Vagina (tissue), 2 donors: ENCODE measurements at regions of chr14 and their contacts with region 1.

Region 1: GRCh38 chr14:35046048-35046741 is at the start of gene FAM177A1:
- DNase-seq: peak; percentile 98 to 99
- H3K4me3 ChIP-seq: peak within 1 kb of the TSS; percentile 77 to 79
- H3K27ac ChIP-seq: peak within 1 kb of the TSS; percentile 88
- H3K4me1 ChIP-seq: peaks cover 31% of the 10 kb centered on the region
- H3K27me3 ChIP-seq: no peaks in the 10 kb centered on the region
- CTCF ChIP-seq: no peak
- POLR2A ChIP-seq: peak; percentile 29 to 80
- total RNA-seq, gene FAM177A1: 41.3 TPM

Region 2: DNA sequence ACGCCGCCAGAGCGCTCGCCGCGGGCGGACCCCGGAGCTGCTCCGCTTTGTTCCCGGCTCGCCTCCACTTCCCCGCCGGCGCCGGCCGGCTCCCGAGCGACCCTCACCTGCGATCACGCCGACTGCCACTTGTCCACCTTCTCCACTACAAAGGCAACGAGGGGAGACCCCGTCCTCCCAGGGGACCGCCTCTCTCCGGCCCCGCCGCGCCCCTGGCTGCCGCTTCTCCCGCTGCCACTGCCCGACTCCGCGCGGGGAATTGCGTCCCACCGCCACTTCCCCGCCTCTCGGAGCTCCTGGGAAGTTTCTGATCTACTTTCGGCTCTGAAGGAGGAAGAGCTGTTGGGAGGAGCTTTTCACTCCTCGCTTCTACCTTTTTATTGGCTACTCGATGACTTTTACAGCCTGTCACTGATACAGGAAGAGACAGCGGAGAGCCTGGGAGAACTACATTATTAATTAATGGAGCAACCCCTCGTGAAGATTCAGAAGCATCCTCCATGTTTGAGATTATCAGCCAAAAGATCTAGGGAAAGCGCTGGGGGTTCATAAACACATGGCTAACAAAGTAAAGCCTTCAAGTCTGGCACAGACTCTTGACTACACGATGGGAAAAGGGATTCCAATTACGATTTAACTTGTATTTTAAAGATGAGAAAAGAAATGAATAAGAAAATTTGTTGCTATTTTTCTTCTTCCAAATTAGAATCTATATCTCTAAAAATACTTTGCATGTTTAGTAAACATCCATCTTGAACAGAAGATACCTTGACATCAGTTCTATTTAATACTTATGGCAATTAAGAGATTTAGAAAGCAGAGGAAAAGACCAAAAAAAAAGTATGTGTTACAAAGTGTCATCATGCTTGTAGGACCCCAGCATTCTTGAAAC is 170.9 kb before region 1 on chr14 and contains the start of gene BAZ1A:
- intact Hi-C with region 1: loop called (anchors 5 kb)
- DNase-seq: peak in 1 of 2 donors; percentile 88
- H3K4me3 ChIP-seq: peak within 1 kb of the TSS; percentile 90 to 96
- H3K27ac ChIP-seq: peak within 1 kb of the TSS; percentile 100
- H3K4me1 ChIP-seq: peaks cover 19% of the 10 kb centered on the region
- H3K27me3 ChIP-seq: no peaks in the 10 kb centered on the region
- CTCF ChIP-seq: peak in 2 of 3 experiments; percentile 15 to 26
- POLR2A ChIP-seq: peak in 1 of 2 donors; percentile 90
- total RNA-seq, gene BAZ1A: 38.5 TPM

Region 3: GRCh38 chr14:34895277-34895676 is 150.9 kb before region 1 on chr14:
- intact Hi-C with region 1: no loop called
- DNase-seq: no peak
- H3K4me3 ChIP-seq: no peak overlapping the region
- H3K27ac ChIP-seq: no peak overlapping the region
- H3K4me1 ChIP-seq: no peaks in the 10 kb centered on the region
- H3K27me3 ChIP-seq: no peaks in the 10 kb centered on the region
- CTCF ChIP-seq: no peak
- POLR2A ChIP-seq: no peak

Region 4: GRCh38 chr14:34982417-34983147 is 63.6 kb before region 1 on chr14 and contains the start of gene SRP54:
- intact Hi-C with region 1: loop called (anchors 2 kb)
- DNase-seq: peak; percentile 99
- H3K4me3 ChIP-seq: peak within 1 kb of the TSS; percentile 63 to 98
- H3K27ac ChIP-seq: peak within 1 kb of the TSS; percentile 97
- H3K4me1 ChIP-seq: peaks cover 55% of the 10 kb centered on the region
- H3K27me3 ChIP-seq: no peaks in the 10 kb centered on the region
- CTCF ChIP-seq: peak in 1 of 3 experiments; percentile 27
- POLR2A ChIP-seq: peak in 1 of 2 donors; percentile 94
- total RNA-seq, gene SRP54: 37.6 TPM

Region 5: GRCh38 chr14:34993426-34993825 is 52.8 kb before region 1 on chr14:
- intact Hi-C with region 1: no loop called
- DNase-seq: no peak
- H3K4me3 ChIP-seq: no peak overlapping the region
- H3K27ac ChIP-seq: no peak overlapping the region
- H3K4me1 ChIP-seq: no peaks in the 10 kb centered on the region
- H3K27me3 ChIP-seq: no peaks in the 10 kb centered on the region
- CTCF ChIP-seq: no peak
- POLR2A ChIP-seq: no peak

Region 6: GRCh38 chr14:35121887-35122695 is 75.9 kb after region 1 on chr14 and contains the starts of genes PPP2R3C and PRORP:
- intact Hi-C with region 1: loop called (anchors 5 kb)
- DNase-seq: peak; percentile 97 to 98
- H3K4me3 ChIP-seq: peak within 1 kb of the TSS; percentile 60 to 67
- H3K27ac ChIP-seq: peak within 1 kb of the TSS; percentile 95
- H3K4me1 ChIP-seq: peaks cover 54% of the 10 kb centered on the region
- H3K27me3 ChIP-seq: no peaks in the 10 kb centered on the region
- CTCF ChIP-seq: no peak
- POLR2A ChIP-seq: peak in 1 of 2 donors; percentile 45
- total RNA-seq, gene PPP2R3C: 14.5 TPM
- total RNA-seq, gene PRORP: 11.0 TPM

Region 7: DNA sequence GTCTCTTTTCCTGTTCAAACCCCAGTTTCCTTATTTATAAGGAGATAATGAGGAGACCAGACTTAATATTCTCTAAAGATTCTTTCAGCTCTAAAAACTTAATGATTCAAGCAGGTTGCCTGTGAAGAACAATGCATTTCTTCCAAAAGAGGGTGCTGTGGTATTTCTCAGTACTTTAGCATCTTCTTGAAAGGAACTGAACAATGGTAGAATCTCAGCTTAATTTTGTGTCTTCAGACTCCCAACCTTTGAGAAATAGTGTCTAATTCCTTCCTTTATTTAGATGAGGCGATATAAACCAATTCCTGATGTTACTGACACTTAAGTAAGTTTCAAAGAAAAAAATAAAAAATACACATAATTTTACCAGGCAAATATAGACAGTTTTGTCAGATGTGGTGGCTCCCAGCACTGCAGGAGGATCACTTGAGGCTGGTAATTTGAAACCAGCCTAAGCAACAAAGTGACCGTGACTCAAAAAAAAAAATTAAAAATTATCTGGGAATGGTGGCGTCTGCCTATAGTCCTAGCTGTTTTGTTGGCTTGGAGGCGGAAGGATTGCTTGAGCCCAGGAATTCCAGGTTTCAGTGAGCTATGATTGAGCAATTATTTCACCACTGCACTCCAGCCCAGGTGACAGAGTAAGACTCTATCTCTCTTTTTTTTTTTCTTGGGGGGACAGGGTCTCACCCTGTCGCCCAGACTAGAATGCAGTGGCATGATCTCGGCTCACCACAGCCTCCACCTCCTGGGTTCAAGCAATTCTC is 169.1 kb after region 1 on chr14:
- intact Hi-C with region 1: no loop called
- DNase-seq: no peak
- H3K4me3 ChIP-seq: no peak overlapping the region
- H3K27ac ChIP-seq: peak overlapping the region; percentile 33
- H3K4me1 ChIP-seq: peaks cover 16% of the 10 kb centered on the region
- H3K27me3 ChIP-seq: no peaks in the 10 kb centered on the region
- CTCF ChIP-seq: peak in 2 of 3 experiments; percentile 19 to 33
- POLR2A ChIP-seq: no peak

Region 8: GRCh38 chr14:35292051-35292769 is 246.0 kb after region 1 on chr14 and contains the start of gene PSMA6:
- intact Hi-C with region 1: loop called (anchors 10 kb)
- DNase-seq: peak; percentile 98
- H3K4me3 ChIP-seq: peak within 1 kb of the TSS; percentile 90 to 95
- H3K27ac ChIP-seq: peak within 1 kb of the TSS; percentile 88
- H3K4me1 ChIP-seq: peaks cover 51% of the 10 kb centered on the region
- H3K27me3 ChIP-seq: no peaks in the 10 kb centered on the region
- CTCF ChIP-seq: no peak
- POLR2A ChIP-seq: peak in 1 of 2 donors; percentile 21
- total RNA-seq, gene PSMA6: 76.9 TPM